ENCODE measurements at regions of chr22 and their contacts with region 1.

Region 1: DNA sequence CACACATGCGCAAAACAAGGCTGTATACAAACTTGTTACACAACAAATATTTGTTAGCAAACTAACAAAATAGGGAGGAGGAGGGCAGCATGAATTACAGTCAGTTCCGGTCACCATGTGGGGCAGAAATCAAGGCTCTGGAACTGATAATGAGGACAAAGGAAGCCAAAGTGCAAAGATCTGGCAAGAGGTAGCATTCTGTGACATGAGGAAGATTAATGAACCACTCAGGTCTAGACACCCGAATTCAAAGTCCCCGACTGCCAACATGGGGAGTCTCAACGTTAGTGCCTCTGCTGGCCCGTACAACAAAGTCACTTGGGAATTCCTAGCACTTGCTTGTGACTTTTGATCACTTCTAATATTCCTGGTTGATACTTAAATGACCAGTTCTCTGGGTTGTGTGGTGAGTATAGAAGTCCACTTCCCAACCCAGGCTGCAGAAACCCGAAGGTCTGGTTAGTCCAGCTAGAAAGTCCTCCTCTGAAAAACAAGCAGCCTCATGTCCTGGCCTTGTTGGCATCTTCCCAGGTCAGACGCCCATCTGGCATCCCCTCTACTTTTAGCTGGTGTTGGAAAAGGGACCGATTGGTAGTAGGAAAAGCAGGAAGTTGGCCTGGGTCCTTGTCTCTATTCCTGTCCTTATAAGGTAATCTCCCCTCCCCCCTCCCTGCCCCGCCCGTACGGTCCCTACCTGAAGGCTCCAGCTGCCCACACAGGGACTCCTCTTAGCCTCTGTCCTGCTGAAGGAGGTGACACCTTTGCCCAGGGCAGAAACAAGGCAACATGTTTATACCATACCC is 1.6 kb downstream of the SUN2 start:
- DNase-seq: peak; percentile 74 to 87 (median 84)
- ATAC-seq: peak; percentile 25
- H3K4me3 ChIP-seq: peak overlapping the region; percentile 85
- H3K27ac ChIP-seq: peak overlapping the region; percentile 99
- H3K4me1 ChIP-seq: no peaks in the 10 kb centered on the region
- H3K27me3 ChIP-seq: no peaks in the 10 kb centered on the region

Region 2: GRCh38 chr22:38713921-38714320 is 40.2 kb before region 1 on chr22:
- intact Hi-C with region 1: loop called in 1 of 4 experiments (anchors 5 kb)
- DNase-seq: no peak
- ATAC-seq: no peak
- H3K4me3 ChIP-seq: no peak overlapping the region
- H3K27ac ChIP-seq: no peak overlapping the region
- H3K4me1 ChIP-seq: peaks cover 11% of the 10 kb centered on the region
- H3K27me3 ChIP-seq: no peaks in the 10 kb centered on the region

Measured in right cardiac atrium (tissue), 5 donors.